Left ventricle myocardium superior (tissue), 1 donor: ENCODE measurements at regions of chr1 and their contacts with region 1.

Region 1: DNA sequence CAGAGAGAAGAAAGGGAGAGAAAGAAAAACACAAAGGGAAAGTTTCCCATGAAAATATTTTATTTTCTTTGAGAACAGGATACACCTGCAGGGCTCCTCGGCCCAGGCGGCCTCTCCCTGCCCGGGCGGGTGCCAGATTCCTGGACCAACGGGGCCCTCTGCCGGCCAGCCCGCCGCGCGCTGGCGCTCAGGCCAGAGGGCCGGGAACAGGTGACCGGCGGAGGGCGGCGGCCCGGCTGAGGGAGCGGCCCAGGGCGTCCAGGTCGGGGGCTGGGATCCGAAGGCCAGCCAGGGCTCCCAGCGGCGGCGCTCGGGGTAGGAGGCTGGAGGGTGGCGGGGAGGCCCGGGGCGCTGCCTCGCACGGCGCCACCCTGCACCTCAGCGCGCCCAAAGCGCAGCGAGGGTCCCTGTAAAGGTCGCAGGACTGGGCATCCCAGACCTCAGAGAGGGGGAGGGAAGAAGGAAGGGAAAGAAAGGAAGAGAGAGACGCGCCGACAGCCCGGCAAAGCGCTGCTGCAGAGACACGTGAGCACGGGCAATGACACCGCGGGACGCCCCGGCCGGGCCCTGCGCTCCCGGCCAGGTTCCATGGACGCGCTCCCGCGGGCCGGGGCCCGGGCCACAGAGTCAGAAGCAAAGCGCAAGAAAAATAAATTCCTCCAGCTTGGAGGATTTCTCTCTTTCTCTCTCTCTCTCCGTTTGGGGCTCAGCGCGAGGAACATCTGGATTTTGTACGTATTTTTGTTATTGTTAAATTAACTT is 927 bp downstream of the WNT9A start:
- DNase-seq: peak; percentile 90
- ATAC-seq: peak; percentile 74

Region 2: DNA sequence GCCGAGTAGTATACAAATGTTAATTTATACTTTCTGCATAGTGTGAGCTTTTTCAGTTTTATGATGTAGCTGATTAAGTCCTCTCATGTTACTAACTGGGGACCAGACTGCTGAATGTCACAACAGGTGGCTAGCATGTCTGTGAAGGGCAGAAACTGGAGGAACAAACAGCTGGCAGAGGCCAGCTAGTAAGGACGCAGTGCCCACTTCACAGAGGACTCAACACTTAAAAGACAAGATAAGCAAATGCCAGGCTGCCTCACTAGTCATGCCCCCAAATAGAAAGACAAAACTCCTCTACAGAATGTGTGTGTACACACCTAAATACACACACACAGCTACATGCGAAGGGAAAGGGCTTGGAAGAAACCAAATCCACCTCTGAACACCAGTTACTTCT is 457.2 kb before region 1 on chr1:
- intact Hi-C with region 1: loop called (anchors 10 kb)
- DNase-seq: peak; percentile 41
- ATAC-seq: peak; percentile 97

Region 3: DNA sequence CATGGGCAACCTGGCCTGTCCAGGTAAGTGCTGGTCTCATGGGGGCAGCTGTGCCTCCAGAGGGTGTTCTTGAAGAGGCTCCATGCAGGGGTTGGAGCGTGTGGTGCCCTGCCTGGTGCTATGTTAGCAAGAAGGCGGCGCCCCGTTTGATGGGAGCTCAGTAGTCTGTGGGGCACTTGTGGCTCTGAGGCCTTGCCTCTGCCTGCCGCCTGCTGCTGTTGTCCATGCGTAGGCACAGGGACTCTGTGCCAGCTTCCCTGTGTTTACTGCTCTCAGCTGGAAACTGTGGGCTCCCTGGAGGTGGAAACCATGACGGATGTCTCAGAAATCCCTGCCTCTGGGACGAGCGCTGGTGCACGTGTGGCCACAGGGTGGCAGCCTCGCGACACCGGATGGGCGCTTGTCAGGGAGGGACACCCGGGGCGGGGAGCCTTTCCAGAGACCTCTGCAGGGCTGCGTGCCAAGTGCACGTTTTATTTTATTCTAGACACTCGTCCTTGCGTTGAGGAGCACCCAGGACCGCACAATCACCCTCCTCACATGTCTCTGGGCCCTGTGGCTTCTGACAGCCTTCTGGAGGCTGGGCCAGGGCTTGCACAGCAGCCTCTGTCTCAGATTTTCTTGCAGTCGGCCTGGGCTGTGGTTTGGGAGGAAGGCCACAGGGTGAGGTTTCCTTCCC is 184.4 kb before region 1 on chr1:
- intact Hi-C with region 1: loop called (anchors 5 kb)
- DNase-seq: peak; percentile 93
- ATAC-seq: peak; percentile 76

Region 4: DNA sequence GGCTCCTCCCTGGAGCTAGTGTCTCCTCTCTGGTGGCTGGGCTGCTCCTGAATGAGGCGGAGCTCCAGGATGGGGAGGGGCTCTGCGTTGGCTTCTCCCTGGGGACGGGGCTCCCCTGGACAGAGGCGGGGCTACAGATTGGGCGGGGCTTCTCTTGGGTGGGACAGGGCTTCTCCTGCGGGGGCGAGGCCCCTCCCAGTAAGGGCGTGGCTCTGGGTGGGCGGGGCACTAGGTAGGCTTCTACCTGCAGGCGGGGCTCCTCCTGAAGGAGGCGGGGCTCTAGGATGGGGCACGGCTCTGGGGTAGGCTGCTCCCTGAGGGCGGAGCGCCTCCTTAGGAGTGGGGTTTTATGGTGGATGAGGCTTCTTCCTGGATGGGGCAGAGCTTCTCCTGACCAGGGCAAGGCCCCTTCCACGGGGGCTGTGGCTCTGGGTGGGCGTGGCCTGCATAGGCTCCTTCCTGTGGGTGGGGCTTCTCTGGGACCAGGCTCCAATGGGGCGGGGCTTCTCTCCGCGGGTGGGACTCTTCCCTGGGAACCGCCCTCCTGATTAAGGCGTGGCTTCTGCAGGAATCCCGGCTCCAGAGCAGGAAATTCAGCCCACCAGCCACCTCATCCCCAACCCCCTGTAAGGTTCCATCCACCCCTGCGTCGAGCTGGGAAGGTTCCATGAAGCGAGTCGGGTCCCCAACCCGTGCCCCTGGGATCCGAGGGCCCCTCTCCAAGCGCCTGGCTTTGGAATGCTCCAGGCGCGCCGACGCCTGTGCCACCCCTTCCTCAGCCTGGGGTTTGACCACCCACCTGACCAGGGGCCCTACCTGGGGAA is 113.0 kb after region 1 on chr1:
- intact Hi-C with region 1: no loop called
- DNase-seq: peak; percentile 41
- ATAC-seq: peak; percentile 47